ENCODE measurements at regions of chr9 and their contacts with region 1.

Region 1: DNA sequence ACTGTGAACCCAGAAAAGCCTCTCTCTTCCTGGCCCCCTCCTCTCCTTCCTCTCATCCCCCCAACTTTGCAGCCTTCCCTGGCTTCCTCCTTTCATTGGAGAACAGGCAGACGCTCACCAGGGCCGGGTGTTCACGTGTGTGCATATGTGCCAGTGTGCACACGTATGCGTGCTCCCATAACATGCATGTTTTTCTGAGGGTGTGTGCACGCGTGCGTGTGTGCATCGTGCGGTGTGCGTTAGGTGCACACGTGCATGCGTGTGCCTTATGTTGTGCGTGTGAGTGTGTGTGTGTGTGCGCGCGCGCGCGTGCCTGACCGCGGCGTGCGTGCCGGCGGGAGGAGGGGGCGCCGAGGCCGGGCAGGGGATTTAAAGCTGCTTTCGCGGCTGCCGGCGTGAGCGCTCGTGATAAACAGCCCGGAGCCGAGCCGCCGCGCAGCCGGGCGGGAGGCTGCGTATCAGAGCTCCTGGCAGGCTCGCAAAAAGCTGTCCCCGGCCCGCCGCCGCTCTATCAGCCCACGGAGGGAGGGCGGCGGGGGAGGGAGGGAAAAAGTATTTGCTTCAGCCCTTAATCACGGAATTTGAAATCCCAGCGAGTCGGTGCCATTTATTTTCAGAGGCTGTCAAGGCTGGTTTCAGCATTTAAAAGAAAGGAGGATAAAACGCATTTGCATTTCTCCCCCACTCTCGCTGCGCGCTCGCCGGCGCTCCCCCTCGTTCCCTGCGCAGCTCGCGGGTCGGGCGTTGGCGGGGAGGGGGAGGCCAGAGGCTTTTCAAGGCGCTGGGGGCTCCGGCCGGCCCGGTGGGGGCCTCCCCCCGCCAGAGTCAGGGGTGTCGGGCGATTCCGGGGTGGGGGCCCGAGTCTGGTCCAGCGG is 183.9 kb downstream of the C9orf50 start:
- DNase-seq: peak; percentile 67 to 86 (median 78)
- ATAC-seq: peak; percentile 45 to 88 (median 82)
- H3K4me3 ChIP-seq: peak overlapping the region; percentile 33 to 65 (median 54)
- H3K27ac ChIP-seq: peak overlapping the region; percentile 20 to 86 (median 72)
- H3K4me1 ChIP-seq: peaks cover 0 to 27% (median 14%) of the 10 kb centered on the region in 12 donors
- H3K27me3 ChIP-seq: peaks cover 0 to 27% (median 0%) of the 10 kb centered on the region in 9 donors
- CTCF ChIP-seq: no peak
- POLR2A ChIP-seq: no peak

Region 2: GRCh38 chr9:129343424-129344375 is 93.3 kb before region 1 on chr9:
- intact Hi-C with region 1: no loop called
- DNase-seq: peak; percentile 66 to 85 (median 75)
- ATAC-seq: peak; percentile 56 to 83 (median 76)
- H3K4me3 ChIP-seq: no peak overlapping the region
- H3K27ac ChIP-seq: peak overlapping the region in 10 of 12 donors; percentile 12 to 94 (median 44)
- H3K4me1 ChIP-seq: peaks cover 0 to 78% (median 5%) of the 10 kb centered on the region in 12 donors
- H3K27me3 ChIP-seq: no peaks in the 10 kb centered on the region
- CTCF ChIP-seq: no peak
- POLR2A ChIP-seq: peak in 1 of 2 donors; percentile 25

Region 3: GRCh38 chr9:129383561-129384416 is 53.2 kb before region 1 on chr9:
- intact Hi-C with region 1: loop called in 1 of 10 experiments (anchors 2 kb)
- DNase-seq: peak; percentile 85 to 92 (median 87)
- ATAC-seq: peak; percentile 68 to 92 (median 89)
- H3K4me3 ChIP-seq: peak overlapping the region; percentile 15 to 78 (median 64)
- H3K27ac ChIP-seq: peak overlapping the region; percentile 90 to 98 (median 96)
- H3K4me1 ChIP-seq: peaks cover 0 to 25% (median 15%) of the 10 kb centered on the region in 12 donors
- H3K27me3 ChIP-seq: no peaks in the 10 kb centered on the region
- CTCF ChIP-seq: peak in 5 of 12 donors; percentile 26 to 47 (median 35)
- POLR2A ChIP-seq: peak in 1 of 2 donors; percentile 41

Region 4: GRCh38 chr9:129394061-129394885 is 42.7 kb before region 1 on chr9:
- intact Hi-C with region 1: no loop called
- DNase-seq: peak in 1 of 5 donors; percentile 51
- ATAC-seq: no peak
- H3K4me3 ChIP-seq: no peak overlapping the region
- H3K27ac ChIP-seq: no peak overlapping the region
- H3K4me1 ChIP-seq: peaks cover 0 to 4% (median 0%) of the 10 kb centered on the region in 12 donors
- H3K27me3 ChIP-seq: no peaks in the 10 kb centered on the region
- CTCF ChIP-seq: no peak
- POLR2A ChIP-seq: no peak

Region 5: DNA sequence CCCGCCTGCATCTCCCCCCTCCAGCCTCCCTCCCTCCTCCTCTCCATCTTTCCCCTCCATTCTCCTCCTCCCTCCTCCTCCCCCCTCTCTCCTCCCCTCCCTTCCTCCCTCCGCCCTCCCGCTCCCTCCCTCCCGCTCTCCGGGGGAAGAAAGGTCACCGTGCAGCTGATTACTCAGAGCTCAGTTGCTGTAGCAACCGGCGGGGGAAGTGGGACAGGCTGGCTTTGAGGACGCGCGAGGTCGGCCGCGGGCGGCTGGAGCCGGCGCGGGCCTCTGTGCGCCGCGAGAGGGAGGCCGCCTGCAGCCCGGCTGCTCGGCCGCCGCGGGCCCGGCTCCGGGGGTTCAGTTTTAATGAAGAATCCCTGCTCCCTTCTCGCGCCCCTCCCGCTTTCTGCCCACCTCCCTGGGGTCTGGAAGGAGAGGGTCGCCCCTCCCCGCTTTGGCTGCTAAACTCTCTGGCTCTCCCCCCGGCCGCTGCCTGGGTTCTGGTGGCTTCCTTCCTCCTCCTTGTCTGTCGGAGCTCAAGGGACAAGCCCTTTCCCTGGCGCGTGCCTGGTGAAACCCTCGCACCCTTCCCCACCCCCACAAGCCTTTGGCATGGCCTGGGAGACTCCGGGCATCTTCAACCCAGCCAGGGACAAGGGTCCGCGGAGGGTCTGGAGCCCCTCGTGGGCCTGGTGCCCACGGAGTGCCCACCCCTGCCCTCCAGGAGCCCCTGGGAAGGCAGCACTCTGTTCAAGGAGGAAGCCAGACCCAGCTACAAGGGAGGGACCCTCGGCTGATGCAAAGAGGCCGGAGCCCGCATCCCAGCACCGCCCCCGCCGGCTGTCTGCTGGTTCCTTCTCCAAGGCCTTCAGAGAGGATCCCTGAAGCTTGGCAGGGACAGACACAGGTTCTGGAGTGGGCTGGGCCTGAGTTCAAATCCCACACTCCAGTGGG is 23.6 kb after region 1 on chr9:
- intact Hi-C with region 1: loop called in 1 of 10 experiments (anchors 2 kb)
- DNase-seq: peak; percentile 97 to 99 (median 98)
- ATAC-seq: peak; percentile 86 to 94 (median 92)
- H3K4me3 ChIP-seq: peak overlapping the region; percentile 16 to 60 (median 51)
- H3K27ac ChIP-seq: peak overlapping the region; percentile 91 to 100 (median 98)
- H3K4me1 ChIP-seq: peaks cover 9 to 52% (median 43%) of the 10 kb centered on the region in 12 donors
- H3K27me3 ChIP-seq: no peaks in the 10 kb centered on the region
- CTCF ChIP-seq: peak in 8 of 12 donors; percentile 5 to 51 (median 28)
- POLR2A ChIP-seq: peak; percentile 39 to 79

Region 6: GRCh38 chr9:130058154-130058553 is 621.2 kb after region 1 on chr9:
- intact Hi-C with region 1: no loop called
- DNase-seq: no peak
- ATAC-seq: no peak
- H3K4me3 ChIP-seq: no peak overlapping the region
- H3K27ac ChIP-seq: no peak overlapping the region
- H3K4me1 ChIP-seq: peaks cover 0 to 35% (median 10%) of the 10 kb centered on the region in 12 donors
- H3K27me3 ChIP-seq: no peaks in the 10 kb centered on the region
- CTCF ChIP-seq: peak in 2 of 12 donors; percentile 22 to 29
- POLR2A ChIP-seq: no peak

Measured in heart left ventricle (tissue), 16 donors.